ENCODE measurements at regions of chr9 and their contacts with region 1.

Region 1: DNA sequence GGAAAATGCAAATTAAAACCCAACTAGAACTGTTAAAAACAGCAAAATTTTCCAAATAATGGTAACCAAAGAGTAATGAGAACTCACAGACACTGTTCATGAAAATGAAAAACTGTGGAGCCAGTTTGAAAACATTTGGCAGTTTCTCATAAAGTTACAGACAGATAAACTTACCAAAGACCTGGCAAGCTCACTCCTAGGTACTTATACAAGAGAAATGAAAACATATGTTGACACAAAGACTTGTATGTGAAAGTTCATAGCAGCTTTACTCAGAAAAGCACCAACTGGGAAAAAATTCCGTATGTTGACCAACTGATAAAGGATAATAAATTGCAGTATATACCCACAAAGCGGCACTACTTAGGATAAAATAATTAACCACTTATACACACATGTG is 10.3 kb downstream of the ZNF782 start:
- DNase-seq: no peak
- ATAC-seq: no peak
- H3K4me3 ChIP-seq: no peak overlapping the region
- H3K27ac ChIP-seq: no peak overlapping the region
- H3K4me1 ChIP-seq: no peaks in the 10 kb centered on the region
- H3K27me3 ChIP-seq: no peaks in the 10 kb centered on the region
- CTCF ChIP-seq: no peak

Region 2: DNA sequence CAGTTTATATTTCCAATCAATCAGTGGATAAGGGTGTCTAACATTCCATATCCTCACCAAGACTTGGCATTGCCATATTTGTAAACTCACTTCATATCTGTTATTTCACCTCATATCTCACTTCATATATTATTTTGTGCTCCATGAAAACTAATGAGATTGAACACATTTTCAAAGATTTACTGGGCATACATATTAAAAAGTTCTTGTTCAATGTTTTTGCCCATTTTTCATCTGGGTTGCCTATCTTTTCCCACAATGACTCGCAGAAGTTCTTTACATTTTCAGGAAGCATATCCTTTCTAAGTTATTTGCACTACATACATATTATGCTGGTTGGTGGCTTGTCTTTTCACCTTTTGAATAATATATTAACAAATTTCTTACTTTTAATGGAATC is 81.5 kb before region 1 on chr9:
- CTCF ChIA-PET with region 1: no interaction called
- POLR2A ChIA-PET with region 1: no interaction called
- in situ Hi-C with region 1: no loop called
- intact Hi-C with region 1: loop called (anchors 10 kb)
- DNase-seq: no peak
- ATAC-seq: no peak
- H3K4me3 ChIP-seq: no peak overlapping the region
- H3K27ac ChIP-seq: no peak overlapping the region
- H3K4me1 ChIP-seq: no peaks in the 10 kb centered on the region
- H3K27me3 ChIP-seq: no peaks in the 10 kb centered on the region
- CTCF ChIP-seq: no peak

Measured in Panc1 (cell line).